ENCODE measurements at regions of chr16 and their contacts with region 1.

Region 1: DNA sequence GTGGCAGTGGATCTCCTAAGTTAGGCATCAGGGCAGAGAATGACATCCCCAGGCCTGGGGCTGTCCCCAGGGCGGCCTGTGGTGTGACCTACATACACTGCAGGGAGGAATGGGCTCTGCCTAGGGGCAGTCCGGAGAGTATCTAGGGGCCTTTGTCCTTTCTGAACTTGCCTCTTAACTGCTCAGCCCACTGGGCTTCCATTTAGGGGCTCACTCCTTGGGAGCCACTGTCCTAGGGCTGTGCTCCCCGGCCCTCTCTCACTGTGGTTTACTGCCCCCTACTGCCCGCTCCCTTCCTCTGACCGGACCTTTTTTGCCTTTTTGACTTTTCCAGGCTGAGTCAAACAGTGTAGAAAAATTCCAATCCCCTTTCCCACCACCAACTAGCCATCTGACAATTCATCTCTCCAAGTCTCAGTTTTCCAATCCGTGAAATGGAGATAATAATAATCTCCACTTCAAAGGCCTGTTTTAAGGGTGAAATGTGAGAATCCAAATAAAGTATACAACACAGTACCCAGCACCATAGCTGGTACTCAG is 66.8 kb downstream of the DNAH3 start:
- DNase-seq: no peak

Region 2: GRCh38 chr16:20799599-20799998 is 284.2 kb before region 1 on chr16:
- intact Hi-C with region 1: loop called (anchors 5 kb)
- DNase-seq: no peak

Region 3: GRCh38 chr16:20849587-20850390 is 234.0 kb before region 1 on chr16:
- intact Hi-C with region 1: loop called (anchors 1 kb)
- DNase-seq: no peak

Measured in cardiac septum (tissue), 1 donor.